Mammary epithelial cell (primary cell): ENCODE measurements at regions of chr10 and their contacts with region 1.

Region 1: DNA sequence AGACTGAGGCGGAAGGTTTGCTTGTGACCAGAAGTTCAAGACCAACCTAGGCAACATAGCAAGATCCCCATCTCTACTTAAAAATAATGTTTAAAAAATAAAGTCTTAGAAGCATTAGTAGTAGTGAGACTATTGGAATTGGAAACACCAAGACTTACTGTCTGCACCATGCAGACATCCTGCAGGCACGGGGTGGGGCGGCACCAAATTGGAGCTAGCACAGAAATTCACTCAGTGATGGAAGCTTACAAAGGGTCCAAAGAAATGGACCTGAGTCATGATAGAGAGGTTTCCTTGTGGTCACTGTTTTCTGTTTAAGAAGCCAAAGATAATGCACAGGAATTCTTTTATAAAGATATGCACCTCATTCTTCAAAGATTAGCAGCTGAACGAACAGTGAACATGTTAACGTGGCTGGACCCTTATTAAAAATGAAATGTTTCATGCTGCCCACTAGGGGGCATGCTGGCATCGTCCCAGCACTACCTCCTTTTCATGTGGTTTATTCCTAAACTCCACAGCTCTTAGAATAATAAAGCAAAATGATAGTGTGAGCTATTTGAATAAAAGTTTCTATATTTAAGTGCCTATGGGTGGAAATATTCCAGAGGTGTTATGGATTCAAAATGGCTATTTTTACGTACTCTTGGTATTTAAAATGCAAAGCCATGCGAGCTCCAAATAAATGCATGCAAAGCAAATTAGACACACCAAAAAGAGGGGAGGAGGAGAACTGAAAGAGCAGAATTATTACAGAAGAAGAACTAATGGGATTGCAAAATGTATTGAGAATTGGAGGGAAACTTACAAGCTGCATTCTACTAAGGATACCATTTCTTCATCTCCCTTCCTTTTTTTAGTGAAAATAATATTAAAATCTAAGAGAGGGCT is 28.6 kb downstream of the PDSS1 start:
- DNase-seq: peak; percentile 29
- H3K4me3 ChIP-seq: no peak overlapping the region
- H3K27ac ChIP-seq: no peak overlapping the region
- H3K4me1 ChIP-seq: no peaks in the 10 kb centered on the region
- H3K27me3 ChIP-seq: no peaks in the 10 kb centered on the region
- CTCF ChIP-seq: peak; percentile 76 to 85

Region 2: GRCh38 chr10:26642896-26643653 is 83.0 kb before region 1 on chr10:
- CTCF ChIA-PET with region 1: no interaction called
- dilution Hi-C with region 1: no loop called
- in situ Hi-C with region 1: no loop called
- intact Hi-C with region 1: no loop called
- DNase-seq: no peak
- H3K4me3 ChIP-seq: no peak overlapping the region
- H3K27ac ChIP-seq: no peak overlapping the region
- H3K4me1 ChIP-seq: no peaks in the 10 kb centered on the region
- H3K27me3 ChIP-seq: no peaks in the 10 kb centered on the region
- CTCF ChIP-seq: no peak

Region 3: DNA sequence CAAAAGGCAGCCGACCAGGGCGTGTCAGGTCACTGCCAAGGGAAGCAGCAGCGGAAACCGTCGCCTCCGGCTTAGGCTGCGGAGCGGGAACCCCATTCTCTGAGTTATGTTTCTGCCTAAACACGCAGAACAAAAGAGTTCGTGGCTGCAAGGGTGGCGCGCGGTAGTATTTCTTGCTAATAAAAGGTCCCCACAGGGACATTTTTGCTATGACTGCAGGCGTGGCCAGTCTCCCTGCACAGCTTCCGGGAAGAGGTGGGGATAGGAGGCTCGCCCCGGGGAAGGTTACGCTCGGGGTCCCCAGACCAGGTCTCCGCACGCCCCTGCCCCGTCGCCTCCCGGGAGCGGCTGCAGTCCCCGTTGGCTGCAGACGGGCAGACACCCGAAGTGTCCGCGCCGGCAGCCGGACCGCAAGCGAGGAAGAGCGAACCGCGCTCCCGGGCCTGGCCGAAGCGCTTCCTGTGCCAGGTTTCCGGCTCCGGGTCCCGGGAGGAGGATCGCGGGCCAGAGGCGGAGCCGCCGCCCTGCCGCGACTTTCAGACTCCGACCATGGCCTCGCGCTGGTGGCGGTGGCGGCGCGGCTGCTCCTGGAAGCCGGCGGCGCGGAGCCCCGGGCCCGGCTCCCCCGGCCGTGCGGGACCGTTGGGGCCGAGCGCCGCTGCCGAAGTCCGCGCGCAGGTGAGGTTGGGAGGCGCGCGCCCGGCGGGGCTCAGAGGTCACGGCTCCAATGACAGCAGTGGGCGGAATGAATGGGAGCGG is 28.7 kb before region 1 on chr10 and contains the start of gene PDSS1:
- CTCF ChIA-PET with region 1: no interaction called
- dilution Hi-C with region 1: no loop called
- in situ Hi-C with region 1: no loop called
- intact Hi-C with region 1: no loop called
- DNase-seq: peak; percentile 72
- H3K4me3 ChIP-seq: peak within 1 kb of the TSS; percentile 71 to 88 (median 76)
- H3K27ac ChIP-seq: peak within 1 kb of the TSS; percentile 47
- H3K4me1 ChIP-seq: peaks cover 5% of the 10 kb centered on the region
- H3K27me3 ChIP-seq: no peaks in the 10 kb centered on the region
- CTCF ChIP-seq: no peak
- total RNA-seq, gene PDSS1: 4.8 to 11.2 TPM

Region 4: GRCh38 chr10:26755443-26755903 is 29.4 kb after region 1 on chr10:
- CTCF ChIA-PET with region 1: interaction called, 11 read pairs
- dilution Hi-C with region 1: no loop called
- in situ Hi-C with region 1: no loop called
- intact Hi-C with region 1: no loop called
- DNase-seq: peak; percentile 64
- H3K4me3 ChIP-seq: no peak overlapping the region
- H3K27ac ChIP-seq: peak overlapping the region; percentile 50
- H3K4me1 ChIP-seq: peaks cover 5% of the 10 kb centered on the region
- H3K27me3 ChIP-seq: no peaks in the 10 kb centered on the region
- CTCF ChIP-seq: no peak

Region 5: DNA sequence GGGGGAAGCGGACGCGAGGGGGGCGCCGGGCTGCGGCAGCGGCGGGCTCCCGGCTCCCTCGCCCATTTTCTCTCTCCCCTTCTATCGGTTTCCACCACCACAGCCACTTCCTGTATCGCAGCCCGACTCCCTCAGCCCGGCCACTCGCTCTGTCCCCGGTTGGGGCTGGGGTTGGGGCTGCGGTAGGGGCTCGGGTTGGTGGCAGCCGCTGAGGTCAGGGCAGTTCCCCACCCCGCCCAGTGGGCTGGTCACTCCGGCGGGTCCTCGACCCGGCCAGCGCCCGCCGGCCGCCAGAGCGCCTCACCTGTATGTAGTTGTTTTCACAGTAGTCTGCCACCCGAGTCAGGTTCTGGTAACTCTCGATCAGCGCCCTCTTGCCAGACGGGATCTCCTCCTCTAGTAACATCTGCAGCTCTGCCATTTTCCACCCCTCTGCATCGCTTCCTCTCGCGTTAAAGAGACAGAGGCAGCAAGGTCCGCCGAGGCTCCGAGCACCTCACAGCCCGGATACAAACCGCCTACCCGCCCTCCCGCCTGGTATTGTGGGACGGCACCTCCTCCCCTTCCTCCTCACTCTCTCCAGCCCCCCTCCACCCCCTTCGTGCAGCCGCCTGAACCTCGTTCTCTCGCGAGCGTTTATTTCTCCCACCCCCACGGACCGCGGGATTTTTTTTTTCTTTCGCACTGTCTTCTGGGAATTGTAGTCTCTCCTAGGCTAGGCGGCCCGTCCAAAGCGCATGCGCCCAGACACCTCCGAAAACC is 134.5 kb after region 1 on chr10 and contains the start of gene ABI1:
- CTCF ChIA-PET with region 1: interaction called, 4 read pairs
- dilution Hi-C with region 1: no loop called
- in situ Hi-C with region 1: no loop called
- intact Hi-C with region 1: loop called (anchors 1 kb)
- DNase-seq: peak; percentile 98
- H3K4me3 ChIP-seq: peak within 1 kb of the TSS; percentile 88 to 100 (median 89)
- H3K27ac ChIP-seq: peak within 1 kb of the TSS; percentile 100
- H3K4me1 ChIP-seq: peaks cover 16% of the 10 kb centered on the region
- H3K27me3 ChIP-seq: no peaks in the 10 kb centered on the region
- CTCF ChIP-seq: no peak
- total RNA-seq, gene ABI1: 55.2 to 72.6 TPM